ENCODE measurements at regions of chr17 and their contacts with region 1.

Region 1: GRCh38 chr17:58352014-58352842 is at the start of gene SUPT4H1:
- DNase-seq: peak; percentile 91
- H3K4me3 Mint-ChIP-seq: peak within 1 kb of the TSS; percentile 100
- H3K27ac Mint-ChIP-seq: peak within 1 kb of the TSS; percentile 98
- H3K4me1 Mint-ChIP-seq: peaks cover 61% of the 10 kb centered on the region
- H3K27me3 Mint-ChIP-seq: no peaks in the 10 kb centered on the region

Region 2: DNA sequence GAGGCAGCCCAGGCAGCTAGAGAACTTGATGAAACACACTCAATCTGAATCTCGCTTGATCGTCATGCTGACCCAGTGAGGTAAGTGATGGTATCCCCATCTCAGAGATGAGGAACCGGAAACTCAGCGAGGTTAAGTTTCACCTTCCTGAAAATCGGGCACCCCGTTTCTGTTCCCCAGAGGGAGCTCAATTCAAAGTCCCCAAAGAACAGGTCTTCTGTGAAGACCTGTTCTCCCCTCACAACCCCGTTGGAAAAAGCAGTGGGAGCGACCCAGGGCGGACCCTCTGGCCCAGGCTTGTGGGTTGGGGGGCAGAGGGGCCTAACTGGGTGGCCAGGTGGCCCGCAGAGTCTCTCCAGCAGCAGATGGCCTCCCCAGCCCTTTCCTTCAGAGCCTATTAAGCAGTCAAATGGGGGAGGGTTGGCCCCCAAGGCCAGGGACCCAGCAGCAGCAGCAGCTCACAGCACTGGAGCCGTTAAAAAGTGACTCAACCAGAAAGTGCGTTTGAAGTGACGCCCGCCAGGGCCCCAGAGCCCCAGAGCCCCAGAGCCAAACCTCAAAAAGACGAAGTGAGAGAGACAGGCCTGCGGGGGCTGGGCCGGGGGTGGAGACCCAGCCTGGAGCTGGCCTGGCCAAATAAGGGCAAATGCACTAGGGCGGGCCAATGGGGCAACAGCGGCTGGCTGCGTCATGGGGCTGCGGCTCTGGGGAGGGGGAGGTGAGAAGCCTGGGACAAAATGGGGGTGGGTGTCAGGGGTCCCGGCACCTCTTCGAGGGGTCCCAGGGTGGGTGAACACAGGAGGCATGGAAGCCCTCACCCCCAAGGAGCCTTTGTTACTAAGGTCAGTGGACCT is 14.4 kb before region 1 on chr17:
- CTCF ChIA-PET with region 1: interaction called, 114 read pairs
- DNase-seq: peak; percentile 96
- H3K4me3 Mint-ChIP-seq: peak overlapping the region; percentile 99
- H3K27ac Mint-ChIP-seq: peak overlapping the region; percentile 99
- H3K4me1 Mint-ChIP-seq: peaks cover 44% of the 10 kb centered on the region
- H3K27me3 Mint-ChIP-seq: no peaks in the 10 kb centered on the region

Region 3: DNA sequence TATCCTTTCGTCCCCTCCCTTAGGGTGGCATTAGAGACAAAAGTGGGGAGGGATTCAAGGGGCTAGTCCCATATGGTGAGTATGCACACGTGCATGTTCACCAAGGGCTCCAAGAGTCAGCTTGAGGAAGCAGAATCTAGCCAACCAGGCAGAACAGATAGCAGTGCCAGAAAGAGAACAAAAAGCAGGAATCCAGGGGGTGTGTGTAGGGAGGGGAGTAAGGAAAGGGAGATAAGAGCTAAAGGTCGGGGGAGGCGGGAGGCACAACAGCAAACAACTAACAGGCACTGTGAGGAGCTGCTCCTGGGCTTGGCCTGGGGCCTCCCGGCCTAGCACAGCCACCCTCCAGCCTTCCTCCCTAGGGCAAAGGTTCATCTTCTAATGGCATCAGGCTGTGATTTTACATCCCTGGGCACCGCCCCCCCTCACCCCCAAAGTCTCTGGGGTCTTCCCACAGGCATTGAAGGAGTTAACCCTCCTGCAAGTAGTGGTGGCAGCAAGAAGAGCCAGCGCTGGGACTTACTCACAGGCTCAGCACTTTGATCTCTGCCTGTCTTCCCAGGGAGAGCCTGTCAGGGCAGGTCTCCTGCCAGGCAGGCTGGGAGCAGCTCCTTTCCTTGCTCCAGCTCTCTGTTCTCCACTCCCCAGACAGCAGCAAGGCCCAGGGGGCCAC is 12.2 kb after region 1 on chr17:
- CTCF ChIA-PET with region 1: interaction called, 11 read pairs
- DNase-seq: no peak
- H3K4me3 Mint-ChIP-seq: no peak overlapping the region
- H3K27ac Mint-ChIP-seq: no peak overlapping the region
- H3K4me1 Mint-ChIP-seq: peaks cover 14% of the 10 kb centered on the region
- H3K27me3 Mint-ChIP-seq: no peaks in the 10 kb centered on the region

Measured in activated naive CD4-positive, alpha-beta T cell treated with anti-CD3 and anti-CD28 coated beads, Interleukin-2, amount 10 ng/mL, durations not matched to agents 7 days and 5 days (primary cell).